ENCODE measurements at regions of chr7 and their contacts with region 1.

Region 1: GRCh38 chr7:43658718-43659548 is 70.4 kb downstream of the COA1 start:
- DNase-seq: no peak
- H3K4me3 Mint-ChIP-seq: peak overlapping the region; percentile 50
- H3K27ac Mint-ChIP-seq: peak overlapping the region; percentile 80
- H3K4me1 Mint-ChIP-seq: peaks cover 50% of the 10 kb centered on the region
- H3K27me3 Mint-ChIP-seq: no peaks in the 10 kb centered on the region
- CTCF ChIP-seq: no peak

Region 2: DNA sequence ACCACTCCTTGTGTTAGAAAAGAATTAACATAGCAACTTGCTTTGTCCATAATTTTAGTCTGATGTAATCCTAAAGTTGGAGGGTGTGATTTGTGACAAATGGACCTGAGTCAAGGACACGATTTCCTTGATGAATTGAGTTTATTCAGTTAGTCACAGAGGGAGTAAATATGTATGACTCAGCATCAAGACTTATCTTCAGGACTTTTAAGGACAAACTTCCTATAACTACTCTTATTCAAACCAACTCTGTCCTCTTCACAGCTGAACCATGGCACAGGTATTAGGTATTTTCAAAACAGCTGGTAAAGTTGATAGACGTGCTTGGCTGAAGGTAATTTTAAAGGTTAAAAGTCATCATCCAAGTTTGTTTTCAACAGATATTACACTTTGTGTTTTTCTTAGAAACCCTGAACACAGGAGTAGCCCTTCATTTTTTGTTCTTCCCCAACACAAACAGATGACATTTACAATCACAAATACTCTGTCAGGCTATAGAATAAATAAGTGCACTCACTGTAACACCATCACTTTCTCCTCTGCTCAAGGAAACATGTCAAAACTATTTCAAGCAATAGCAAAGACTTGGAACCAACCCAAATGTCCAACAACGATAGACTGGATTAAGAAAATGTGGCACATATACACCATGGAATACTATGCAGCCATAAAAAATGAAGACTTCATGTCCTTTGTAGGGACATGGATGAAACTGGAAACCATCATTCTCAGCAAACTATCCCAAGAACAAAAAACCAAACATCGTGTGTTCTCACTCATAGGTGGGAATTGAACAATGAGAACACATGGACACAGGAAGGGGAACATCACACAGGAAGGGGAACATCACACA is 15.9 kb after region 1 on chr7:
- CTCF ChIA-PET with region 1: no interaction called
- intact Hi-C with region 1: loop called (anchors 1 kb)
- DNase-seq: peak; percentile 40
- H3K4me3 Mint-ChIP-seq: peak overlapping the region; percentile 34
- H3K27ac Mint-ChIP-seq: peak overlapping the region; percentile 98
- H3K4me1 Mint-ChIP-seq: peaks cover 44% of the 10 kb centered on the region
- H3K27me3 Mint-ChIP-seq: no peaks in the 10 kb centered on the region
- CTCF ChIP-seq: no peak